ENCODE measurements at regions of chr13 and their contacts with region 1.

Region 1: DNA sequence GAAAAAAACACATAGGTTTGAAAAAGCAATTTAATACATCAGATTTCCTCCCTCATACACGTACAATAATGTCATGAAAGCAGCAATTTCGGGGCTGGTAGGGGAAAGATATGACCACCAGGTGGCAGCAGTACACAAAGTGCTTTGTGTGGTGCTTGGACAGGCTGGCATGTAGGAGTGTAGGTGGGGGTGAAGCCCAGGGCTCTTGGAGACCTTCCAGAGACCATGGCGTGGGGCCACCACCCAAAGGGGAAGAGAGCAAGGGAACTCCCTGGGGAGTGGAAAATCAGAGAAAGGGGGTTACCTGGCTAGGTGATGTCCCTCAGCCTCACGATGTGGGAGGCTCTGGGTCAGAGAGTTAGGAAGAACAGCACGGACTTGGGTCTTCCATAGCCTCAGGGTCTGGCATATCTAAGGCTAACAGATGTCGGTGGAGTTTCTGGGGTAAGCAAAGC is 11.8 kb upstream of the CCNA1 start:
- DNase-seq: peak; percentile 81
- ATAC-seq: peak; percentile 94
- H3K4me3 ChIP-seq: no peak overlapping the region
- H3K27ac ChIP-seq: no peak overlapping the region
- H3K4me1 ChIP-seq: peaks cover 20% of the 10 kb centered on the region; the same call in 1 of the 2 replicates
- H3K27me3 ChIP-seq: no peaks in the 10 kb centered on the region
- CTCF ChIP-seq: peak; percentile 88

Region 2: DNA sequence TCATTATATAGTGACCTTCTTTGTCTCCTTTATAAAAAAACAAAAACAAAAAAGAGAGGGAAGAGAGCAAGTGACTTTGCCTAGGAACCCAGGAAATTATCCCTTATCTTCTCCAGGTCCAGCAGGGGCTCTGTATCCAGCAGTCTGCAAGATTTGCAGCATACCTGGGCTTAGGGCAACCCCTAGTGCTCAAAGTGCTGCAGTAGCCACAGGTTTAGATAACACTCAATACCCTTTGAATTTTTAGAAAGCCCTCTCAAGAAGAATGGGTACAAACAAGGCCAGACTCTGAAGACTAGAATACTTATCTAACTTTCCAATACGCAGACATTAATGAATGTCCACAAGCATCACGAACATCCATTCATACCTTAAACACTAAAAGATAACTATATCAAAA is 55.0 kb after region 1 on chr13:
- CTCF ChIA-PET with region 1: no interaction called
- POLR2A ChIA-PET with region 1: no interaction called
- intact Hi-C with region 1: loop called (anchors 1 kb)
- DNase-seq: peak; percentile 58
- ATAC-seq: peak; percentile 73
- H3K4me3 ChIP-seq: no peak overlapping the region
- H3K27ac ChIP-seq: no peak overlapping the region
- H3K4me1 ChIP-seq: no peaks in the 10 kb centered on the region
- H3K27me3 ChIP-seq: peaks cover 11% of the 10 kb centered on the region; the same call in 1 of the 2 replicates
- CTCF ChIP-seq: peak; percentile 63

Region 3: DNA sequence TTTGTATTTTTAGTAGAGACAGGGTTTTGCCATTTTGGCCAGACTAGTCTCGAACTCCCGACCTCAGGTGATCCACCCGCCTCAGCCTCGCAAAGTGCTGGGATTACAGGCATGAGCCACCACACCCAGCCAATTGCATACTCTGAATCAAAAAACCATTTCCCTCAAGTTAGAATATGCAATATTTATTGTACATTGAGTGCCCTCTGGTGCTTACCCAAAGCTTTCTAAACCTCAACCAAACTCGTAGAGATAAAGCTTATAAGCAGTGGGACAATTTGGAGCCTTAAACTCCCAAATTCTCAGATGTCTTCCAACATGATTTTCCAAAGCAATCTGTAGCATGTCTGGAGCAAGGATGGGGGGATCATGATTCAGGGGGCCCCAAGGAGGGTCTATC is 420.9 kb after region 1 on chr13:
- CTCF ChIA-PET with region 1: no interaction called
- POLR2A ChIA-PET with region 1: no interaction called
- intact Hi-C with region 1: loop called (anchors 1 kb)
- DNase-seq: peak; percentile 36
- ATAC-seq: peak; percentile 29; the same call in 1 of the 2 replicates
- H3K4me3 ChIP-seq: no peak overlapping the region
- H3K27ac ChIP-seq: no peak overlapping the region
- H3K4me1 ChIP-seq: no peaks in the 10 kb centered on the region
- H3K27me3 ChIP-seq: no peaks in the 10 kb centered on the region
- CTCF ChIP-seq: peak; percentile 29; the same call in 1 of the 2 replicates